ENCODE measurements at regions of chr7 and their contacts with region 1.

Region 1: DNA sequence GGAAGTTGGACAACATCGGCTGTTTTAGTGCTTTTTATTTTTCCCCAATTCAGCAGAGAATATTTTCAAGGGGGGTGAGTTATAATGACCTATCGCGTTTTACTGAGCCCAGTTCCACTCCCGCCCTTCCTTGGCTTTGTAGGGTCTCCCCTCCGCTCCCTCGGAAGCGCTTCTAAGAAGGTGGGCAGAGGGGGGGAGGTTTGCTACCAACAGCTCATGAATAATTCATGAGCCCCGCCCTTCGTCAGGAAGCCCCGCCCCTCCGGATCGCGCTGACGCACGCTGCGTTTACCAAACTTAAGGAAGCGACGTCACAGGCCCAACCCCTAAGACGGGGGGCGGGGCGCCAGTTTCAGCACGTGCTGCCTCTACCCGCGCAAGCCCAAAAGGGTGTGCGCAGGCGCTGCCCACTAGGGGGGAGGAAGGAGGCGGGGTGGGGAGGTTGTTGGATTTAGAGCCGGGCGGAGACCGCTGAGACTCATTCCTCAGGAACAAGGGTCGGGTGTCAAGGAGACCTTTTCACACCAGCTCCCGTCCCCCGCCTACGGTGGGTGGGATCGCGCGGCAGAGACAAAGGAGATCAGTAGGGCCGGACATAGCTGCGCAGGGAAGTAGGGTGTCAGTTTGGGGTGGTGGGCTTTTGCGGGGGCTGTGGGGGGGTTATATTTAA is 529 bp upstream of the MEPCE start:
- DNase-seq: peak; percentile 100
- ATAC-seq: peak; percentile 64
- H3K4me3 ChIP-seq: peak overlapping the region; percentile 69 to 96
- H3K4me3 Mint-ChIP-seq: peak overlapping the region; percentile 100
- H3K27ac ChIP-seq: peak overlapping the region; percentile 99 to 100
- H3K27ac Mint-ChIP-seq: peak overlapping the region; percentile 100
- H3K4me1 ChIP-seq: peaks cover 34% of the 10 kb centered on the region
- H3K4me1 Mint-ChIP-seq: peaks cover 42% of the 10 kb centered on the region
- H3K27me3 ChIP-seq: no peaks in the 10 kb centered on the region
- H3K27me3 Mint-ChIP-seq: no peaks in the 10 kb centered on the region
- CTCF ChIP-seq: no peak

Region 2: DNA sequence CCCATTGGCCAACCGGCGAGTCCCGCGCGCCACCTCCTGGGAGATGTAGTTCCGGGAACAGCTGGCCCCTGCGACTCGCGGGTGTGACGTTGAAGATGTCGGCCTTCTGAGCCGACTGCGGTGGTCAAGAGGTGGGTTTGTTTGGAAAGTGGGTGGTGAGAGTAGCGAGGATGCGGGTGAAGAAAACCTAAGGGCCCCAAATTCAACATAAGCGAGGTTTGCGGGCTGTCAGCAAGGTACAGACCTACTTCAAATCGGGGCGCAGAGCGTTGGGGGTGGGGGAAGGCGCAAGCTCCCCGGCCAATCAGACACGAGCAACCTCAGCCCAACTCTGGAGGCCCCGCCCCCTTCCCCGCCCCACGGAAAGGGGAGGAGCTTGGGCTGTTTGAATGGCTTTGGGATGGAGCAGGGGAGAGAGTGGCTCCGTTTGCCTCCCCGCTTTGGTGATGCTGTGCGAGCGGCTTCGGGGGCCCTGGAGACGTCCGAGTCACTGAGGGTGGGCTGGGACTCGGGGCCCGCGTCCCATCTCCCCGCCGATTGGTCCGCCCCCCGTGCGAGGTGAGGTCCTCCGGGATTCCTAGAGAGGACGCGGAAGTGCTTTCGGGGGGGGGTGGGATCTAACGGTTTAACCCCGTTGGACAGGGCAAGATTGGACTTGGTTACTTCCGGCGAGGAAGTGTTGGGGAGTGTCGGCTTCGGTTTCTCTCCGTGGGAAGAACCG is 924.3 kb before region 1 on chr7 and contains the start of gene ZKSCAN5:
- CTCF ChIA-PET with region 1: no interaction called
- POLR2A ChIA-PET with region 1: no interaction called
- intact Hi-C with region 1: loop called in 1 of 2 experiments (anchors 2 kb)
- DNase-seq: peak; percentile 95 to 99 (median 97)
- ATAC-seq: peak; percentile 87
- H3K4me3 ChIP-seq: peak within 1 kb of the TSS; percentile 87 to 93
- H3K4me3 Mint-ChIP-seq: peak within 1 kb of the TSS; percentile 99
- H3K27ac ChIP-seq: peak within 1 kb of the TSS; percentile 67 to 96
- H3K27ac Mint-ChIP-seq: peak within 1 kb of the TSS; percentile 97
- H3K4me1 ChIP-seq: peaks cover 29% of the 10 kb centered on the region
- H3K4me1 Mint-ChIP-seq: peaks cover 39% of the 10 kb centered on the region
- H3K27me3 ChIP-seq: no peaks in the 10 kb centered on the region
- H3K27me3 Mint-ChIP-seq: no peaks in the 10 kb centered on the region
- CTCF ChIP-seq: no peak
- total RNA-seq, gene ZKSCAN5: 6.0 to 6.2 TPM

Region 3: DNA sequence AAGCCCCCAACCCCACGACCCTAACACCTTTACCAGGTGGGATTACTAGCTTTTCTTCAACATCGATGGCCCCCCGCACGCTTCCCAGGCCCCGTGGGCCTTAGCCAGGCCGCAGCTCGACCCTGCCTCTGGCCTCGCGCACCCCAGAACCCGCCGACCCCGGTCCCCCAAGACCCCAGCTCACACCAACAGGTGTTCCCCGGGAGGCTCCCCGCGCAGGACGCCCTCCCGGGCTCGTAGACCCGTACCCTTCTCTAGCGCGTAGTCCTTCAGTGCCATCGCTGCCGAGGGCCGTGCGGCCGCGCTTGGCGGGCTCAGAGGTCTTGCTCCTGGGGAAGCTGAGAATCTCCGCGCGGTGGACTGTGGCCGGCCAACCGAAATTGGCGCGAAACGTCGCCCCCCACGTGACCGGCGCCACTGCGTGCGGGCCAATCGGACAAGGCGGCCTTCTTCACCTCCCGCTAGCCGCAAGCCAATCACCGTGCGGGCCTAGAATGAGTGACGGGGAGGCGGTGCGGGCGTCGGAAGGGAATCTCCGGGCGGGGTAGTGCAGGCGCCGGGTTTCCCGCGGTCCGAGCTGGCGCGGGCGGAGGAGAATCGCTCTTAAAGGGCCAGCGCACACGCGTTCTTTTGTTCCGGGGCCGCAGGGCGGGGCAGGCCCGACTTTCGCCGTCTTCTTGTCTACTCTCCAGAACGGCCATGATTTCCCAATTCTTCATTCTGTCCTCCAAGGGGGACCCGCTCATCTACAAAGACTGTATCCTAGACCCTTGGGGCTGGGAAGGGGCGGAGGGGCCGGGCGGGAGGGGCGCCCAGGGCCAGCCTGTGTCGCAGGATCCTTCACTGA is 327.9 kb before region 1 on chr7 and contains the starts of genes AP4M1 and MCM7:
- CTCF ChIA-PET with region 1: no interaction called
- POLR2A ChIA-PET with region 1: interaction called, 7 read pairs
- intact Hi-C with region 1: loop called in 1 of 2 experiments (anchors 1 kb)
- DNase-seq: peak; percentile 88 to 98 (median 96)
- ATAC-seq: peak; percentile 83
- H3K4me3 ChIP-seq: peak within 1 kb of the TSS; percentile 91 to 98
- H3K4me3 Mint-ChIP-seq: peak within 1 kb of the TSS; percentile 95
- H3K27ac ChIP-seq: peak within 1 kb of the TSS; percentile 80 to 89
- H3K27ac Mint-ChIP-seq: peak within 1 kb of the TSS; percentile 97
- H3K4me1 ChIP-seq: peaks cover 27% of the 10 kb centered on the region
- H3K4me1 Mint-ChIP-seq: peaks cover 41% of the 10 kb centered on the region
- H3K27me3 ChIP-seq: no peaks in the 10 kb centered on the region
- H3K27me3 Mint-ChIP-seq: no peaks in the 10 kb centered on the region
- CTCF ChIP-seq: no peak
- total RNA-seq, gene AP4M1: 2.8 to 3.9 TPM
- total RNA-seq, gene MCM7: 63.7 to 64.6 TPM

Region 4: DNA sequence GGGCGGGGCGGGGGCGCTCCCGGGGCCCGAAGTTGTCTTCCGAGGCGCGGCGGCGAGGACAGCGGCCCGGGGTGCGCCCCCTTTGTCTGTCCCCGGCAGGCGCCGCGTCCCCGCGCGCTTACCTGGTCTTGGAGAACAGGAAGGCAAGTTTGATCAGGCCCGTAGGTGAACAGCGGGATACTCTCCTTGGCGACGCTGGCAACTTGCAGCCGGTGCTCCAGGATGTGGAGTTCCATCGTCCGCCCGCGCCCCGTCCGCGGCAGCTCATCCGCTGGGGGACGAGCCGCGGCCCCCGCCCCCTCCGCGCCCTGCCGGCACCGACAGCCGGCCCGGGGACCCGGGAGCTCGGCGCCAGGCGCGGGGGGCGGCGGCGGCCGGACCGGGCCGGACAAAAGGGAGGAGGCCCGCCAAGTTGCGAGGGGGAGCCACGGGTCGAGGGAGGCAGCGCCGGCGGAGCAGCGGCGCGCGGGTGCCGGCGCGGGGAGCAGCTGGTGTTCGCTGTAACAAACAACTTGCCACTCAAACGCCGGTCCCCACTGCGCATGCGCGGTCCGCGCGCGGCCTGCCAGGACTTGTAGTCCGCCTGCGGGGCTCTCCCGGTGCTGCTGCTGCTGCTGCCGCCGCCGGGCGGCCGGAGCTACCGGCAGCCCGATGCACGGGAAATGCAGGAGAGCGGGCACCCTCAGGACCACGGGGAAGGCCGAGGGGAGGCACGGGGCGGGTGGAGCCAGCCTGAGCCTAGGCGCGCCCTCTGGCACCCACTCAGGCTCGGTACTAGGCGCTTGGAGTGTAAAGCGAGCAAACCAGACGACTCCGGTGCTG is 157.2 kb before region 1 on chr7:
- CTCF ChIA-PET with region 1: no interaction called
- POLR2A ChIA-PET with region 1: interaction called, 5 read pairs
- intact Hi-C with region 1: loop called in 1 of 2 experiments (anchors 2 kb)
- DNase-seq: peak; percentile 96 to 100 (median 98)
- ATAC-seq: peak; percentile 89
- H3K4me3 ChIP-seq: peak overlapping the region; percentile 46 to 50
- H3K4me3 Mint-ChIP-seq: peak overlapping the region; percentile 81
- H3K27ac ChIP-seq: peak overlapping the region; percentile 25 to 51
- H3K27ac Mint-ChIP-seq: peak overlapping the region; percentile 81
- H3K4me1 ChIP-seq: peaks cover 11% of the 10 kb centered on the region
- H3K4me1 Mint-ChIP-seq: peaks cover 12% of the 10 kb centered on the region
- H3K27me3 ChIP-seq: no peaks in the 10 kb centered on the region
- H3K27me3 Mint-ChIP-seq: no peaks in the 10 kb centered on the region
- CTCF ChIP-seq: peak; percentile 25

Region 5: DNA sequence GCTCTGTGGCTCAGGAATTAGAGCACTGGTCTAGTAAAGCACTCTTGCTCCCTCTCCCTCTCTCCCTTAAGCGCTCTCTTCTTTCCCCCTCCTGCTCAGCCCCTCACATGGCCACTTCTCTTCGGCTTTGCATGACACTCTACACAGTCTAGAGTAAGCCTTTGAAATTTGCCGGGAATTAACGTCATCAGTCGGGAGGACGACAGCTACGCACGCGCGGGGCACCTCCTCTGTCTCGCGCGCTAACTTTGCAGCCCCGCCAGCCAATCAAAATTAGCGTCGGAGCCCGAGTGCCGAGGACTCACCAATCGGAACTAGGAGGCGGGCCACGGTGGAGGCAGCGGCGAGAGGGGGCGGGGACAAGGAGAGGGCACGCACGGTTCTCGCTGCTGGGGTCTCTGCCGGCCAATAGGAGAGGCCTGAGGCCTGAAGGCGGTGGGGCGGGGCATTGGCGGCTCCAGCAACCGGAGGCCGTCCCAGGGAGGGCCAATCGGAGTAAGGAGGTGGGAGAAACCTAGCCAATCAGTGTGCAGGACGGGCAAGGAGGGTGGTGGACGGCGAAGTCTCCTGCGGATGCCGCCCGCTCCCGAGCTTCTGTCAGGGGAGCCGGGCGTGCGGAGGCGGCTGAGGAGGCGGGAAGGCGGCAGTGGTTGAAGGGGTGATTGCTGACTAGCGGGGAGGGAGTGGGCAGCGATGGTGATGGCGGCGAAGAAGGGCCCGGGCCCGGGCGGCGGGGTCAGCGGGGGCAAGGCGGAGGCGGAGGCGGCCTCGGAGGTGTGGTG is 109.7 kb after region 1 on chr7 and contains the start of gene AGFG2:
- CTCF ChIA-PET with region 1: no interaction called
- POLR2A ChIA-PET with region 1: no interaction called
- intact Hi-C with region 1: loop called (anchors 2 kb)
- DNase-seq: peak; percentile 100
- ATAC-seq: peak; percentile 94
- H3K4me3 ChIP-seq: peak within 1 kb of the TSS; percentile 67 to 74
- H3K4me3 Mint-ChIP-seq: peak within 1 kb of the TSS; percentile 99
- H3K27ac ChIP-seq: peak within 1 kb of the TSS; percentile 48 to 61
- H3K27ac Mint-ChIP-seq: peak within 1 kb of the TSS; percentile 84
- H3K4me1 ChIP-seq: peaks cover 40% of the 10 kb centered on the region
- H3K4me1 Mint-ChIP-seq: peaks cover 49% of the 10 kb centered on the region
- H3K27me3 ChIP-seq: no peaks in the 10 kb centered on the region
- H3K27me3 Mint-ChIP-seq: no peaks in the 10 kb centered on the region
- CTCF ChIP-seq: no peak
- total RNA-seq, gene AGFG2: 4.4 to 6.3 TPM

Region 6: GRCh38 chr7:100705753-100706671 is 276.9 kb after region 1 on chr7 and contains the start of gene POP7:
- CTCF ChIA-PET with region 1: no interaction called
- POLR2A ChIA-PET with region 1: interaction called, 17 read pairs
- intact Hi-C with region 1: loop called in 1 of 2 experiments (anchors 5 kb)
- DNase-seq: peak; percentile 93 to 99 (median 98)
- ATAC-seq: peak; percentile 95
- H3K4me3 ChIP-seq: peak within 1 kb of the TSS; percentile 80 to 94
- H3K4me3 Mint-ChIP-seq: peak within 1 kb of the TSS; percentile 96
- H3K27ac ChIP-seq: peak within 1 kb of the TSS; percentile 53 to 82
- H3K27ac Mint-ChIP-seq: peak within 1 kb of the TSS; percentile 94
- H3K4me1 ChIP-seq: peaks cover 16% of the 10 kb centered on the region
- H3K4me1 Mint-ChIP-seq: peaks cover 19% of the 10 kb centered on the region
- H3K27me3 ChIP-seq: no peaks in the 10 kb centered on the region
- H3K27me3 Mint-ChIP-seq: peaks cover 2% of the 10 kb centered on the region
- CTCF ChIP-seq: no peak
- total RNA-seq, gene POP7: 9.3 to 11.0 TPM

Region 7: DNA sequence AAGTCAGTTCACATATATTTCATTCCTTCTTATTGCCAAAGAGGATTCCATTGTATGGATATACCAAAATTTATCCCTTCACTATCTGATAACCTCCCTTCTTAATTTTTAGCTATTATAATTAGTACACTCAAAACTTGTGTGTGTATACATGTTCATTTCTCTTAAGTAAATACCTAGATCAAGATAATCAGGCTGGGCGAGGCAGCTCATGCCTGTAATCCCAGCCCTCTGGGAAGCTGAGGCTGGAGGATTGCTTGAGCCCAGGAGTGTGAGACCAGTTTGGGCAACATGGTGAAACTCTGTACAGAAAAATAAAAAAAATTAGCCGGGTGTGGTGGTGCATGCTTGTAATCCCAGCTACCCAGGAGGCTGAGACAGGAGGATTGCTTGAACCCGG is 482.4 kb after region 1 on chr7:
- CTCF ChIA-PET with region 1: no interaction called
- POLR2A ChIA-PET with region 1: no interaction called
- intact Hi-C with region 1: no loop called
- DNase-seq: no peak
- ATAC-seq: no peak
- H3K4me3 ChIP-seq: no peak overlapping the region
- H3K4me3 Mint-ChIP-seq: no peak overlapping the region
- H3K27ac ChIP-seq: no peak overlapping the region
- H3K27ac Mint-ChIP-seq: no peak overlapping the region
- H3K4me1 ChIP-seq: no peaks in the 10 kb centered on the region
- H3K4me1 Mint-ChIP-seq: peaks cover 2% of the 10 kb centered on the region
- H3K27me3 ChIP-seq: no peaks in the 10 kb centered on the region
- H3K27me3 Mint-ChIP-seq: peaks cover 21% of the 10 kb centered on the region
- CTCF ChIP-seq: no peak

Measured in CD8-positive, alpha-beta T cell (primary cell).